Colonic mucosa (tissue), 4 donors: ENCODE measurements at regions of chr3 and their contacts with region 1.

Region 1: GRCh38 chr3:135752846-135753245 is 212.7 kb upstream of the PPP2R3A start:
- DNase-seq: no peak
- H3K4me3 ChIP-seq: no peak overlapping the region
- H3K27ac ChIP-seq: no peak overlapping the region
- H3K4me1 ChIP-seq: no peaks in the 10 kb centered on the region
- H3K27me3 ChIP-seq: no peaks in the 10 kb centered on the region
- CTCF ChIP-seq: no peak

Region 2: DNA sequence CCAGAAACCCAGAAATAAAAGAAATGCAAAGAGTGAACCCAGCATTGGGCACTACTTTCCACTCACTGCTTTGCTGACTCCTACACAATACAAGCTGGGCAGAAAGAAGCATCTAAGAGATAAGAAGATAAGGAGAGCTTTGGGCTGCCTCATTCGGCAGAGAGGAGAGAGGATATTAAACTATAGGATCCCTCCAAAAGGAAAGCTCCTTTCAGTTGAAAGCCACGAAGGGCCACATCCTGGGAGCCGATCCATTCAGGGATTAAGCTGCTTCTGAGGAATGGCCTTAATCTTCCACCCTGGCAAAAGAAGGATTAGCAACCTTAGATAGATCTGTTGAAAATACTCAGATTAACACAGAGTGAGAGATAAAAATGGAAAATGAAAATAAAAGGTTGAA is 62.2 kb before region 1 on chr3:
- intact Hi-C with region 1: no loop called
- DNase-seq: no peak
- H3K4me3 ChIP-seq: no peak overlapping the region
- H3K27ac ChIP-seq: no peak overlapping the region
- H3K4me1 ChIP-seq: no peaks in the 10 kb centered on the region
- H3K27me3 ChIP-seq: no peaks in the 10 kb centered on the region
- CTCF ChIP-seq: no peak

Region 3: GRCh38 chr3:136008231-136008630 is 255.4 kb after region 1 on chr3:
- intact Hi-C with region 1: no loop called
- DNase-seq: no peak
- H3K4me3 ChIP-seq: no peak overlapping the region
- H3K27ac ChIP-seq: no peak overlapping the region
- H3K4me1 ChIP-seq: no peaks in the 10 kb centered on the region
- H3K27me3 ChIP-seq: no peaks in the 10 kb centered on the region
- CTCF ChIP-seq: no peak

Region 4: GRCh38 chr3:136018876-136019275 is 266.0 kb after region 1 on chr3:
- intact Hi-C with region 1: loop called (anchors 5 kb)
- DNase-seq: no peak
- H3K4me3 ChIP-seq: no peak overlapping the region
- H3K27ac ChIP-seq: no peak overlapping the region
- H3K4me1 ChIP-seq: no peaks in the 10 kb centered on the region
- H3K27me3 ChIP-seq: no peaks in the 10 kb centered on the region
- CTCF ChIP-seq: no peak